Lower lobe of right lung (tissue), 2 donors: ENCODE measurements at regions of chr4 and their contacts with region 1.

Region 1: GRCh38 chr4:21512353-21512752 is 436.2 kb downstream of the KCNIP4 start:
- DNase-seq: no peak
- ATAC-seq: peak in 1 of 2 donors; percentile 35
- H3K4me3 ChIP-seq: no peak overlapping the region
- H3K27ac ChIP-seq: no peak overlapping the region
- H3K4me1 ChIP-seq: no peaks in the 10 kb centered on the region
- H3K27me3 ChIP-seq: no peaks in the 10 kb centered on the region
- CTCF ChIP-seq: peak; percentile 33

Region 2: DNA sequence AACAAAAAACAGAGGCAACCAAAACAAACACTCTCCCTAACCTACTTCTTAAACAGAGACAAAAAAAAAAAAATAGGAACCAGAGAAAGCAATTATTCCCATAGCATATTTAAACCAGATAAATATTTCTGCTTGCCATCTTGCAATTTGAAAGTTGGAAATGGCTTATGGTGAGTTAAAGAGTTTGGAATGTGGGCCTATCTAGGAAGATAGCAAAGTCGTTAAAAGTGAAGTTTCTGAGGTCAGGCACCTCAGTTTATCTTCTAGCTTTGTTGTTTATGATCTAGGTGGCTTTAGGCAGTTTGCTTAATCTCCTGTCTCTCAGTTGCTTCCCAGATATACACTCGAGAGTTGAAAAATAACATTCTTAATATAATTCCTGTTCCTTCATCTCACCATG is 152.0 kb after region 1 on chr4:
- intact Hi-C with region 1: no loop called
- DNase-seq: no peak
- ATAC-seq: no peak
- H3K4me3 ChIP-seq: no peak overlapping the region
- H3K27ac ChIP-seq: no peak overlapping the region
- H3K4me1 ChIP-seq: no peaks in the 10 kb centered on the region
- H3K27me3 ChIP-seq: no peaks in the 10 kb centered on the region
- CTCF ChIP-seq: no peak

Region 3: GRCh38 chr4:21765810-21766407 is 253.6 kb after region 1 on chr4:
- intact Hi-C with region 1: loop called (anchors 5 kb)
- DNase-seq: no peak
- ATAC-seq: peak; percentile 76 to 77
- H3K4me3 ChIP-seq: no peak overlapping the region
- H3K27ac ChIP-seq: no peak overlapping the region
- H3K4me1 ChIP-seq: no peaks in the 10 kb centered on the region
- H3K27me3 ChIP-seq: no peaks in the 10 kb centered on the region
- CTCF ChIP-seq: peak; percentile 81